HEK293 (cell line): ENCODE measurements at regions of chr1 and their contacts with region 1.

Region 1: DNA sequence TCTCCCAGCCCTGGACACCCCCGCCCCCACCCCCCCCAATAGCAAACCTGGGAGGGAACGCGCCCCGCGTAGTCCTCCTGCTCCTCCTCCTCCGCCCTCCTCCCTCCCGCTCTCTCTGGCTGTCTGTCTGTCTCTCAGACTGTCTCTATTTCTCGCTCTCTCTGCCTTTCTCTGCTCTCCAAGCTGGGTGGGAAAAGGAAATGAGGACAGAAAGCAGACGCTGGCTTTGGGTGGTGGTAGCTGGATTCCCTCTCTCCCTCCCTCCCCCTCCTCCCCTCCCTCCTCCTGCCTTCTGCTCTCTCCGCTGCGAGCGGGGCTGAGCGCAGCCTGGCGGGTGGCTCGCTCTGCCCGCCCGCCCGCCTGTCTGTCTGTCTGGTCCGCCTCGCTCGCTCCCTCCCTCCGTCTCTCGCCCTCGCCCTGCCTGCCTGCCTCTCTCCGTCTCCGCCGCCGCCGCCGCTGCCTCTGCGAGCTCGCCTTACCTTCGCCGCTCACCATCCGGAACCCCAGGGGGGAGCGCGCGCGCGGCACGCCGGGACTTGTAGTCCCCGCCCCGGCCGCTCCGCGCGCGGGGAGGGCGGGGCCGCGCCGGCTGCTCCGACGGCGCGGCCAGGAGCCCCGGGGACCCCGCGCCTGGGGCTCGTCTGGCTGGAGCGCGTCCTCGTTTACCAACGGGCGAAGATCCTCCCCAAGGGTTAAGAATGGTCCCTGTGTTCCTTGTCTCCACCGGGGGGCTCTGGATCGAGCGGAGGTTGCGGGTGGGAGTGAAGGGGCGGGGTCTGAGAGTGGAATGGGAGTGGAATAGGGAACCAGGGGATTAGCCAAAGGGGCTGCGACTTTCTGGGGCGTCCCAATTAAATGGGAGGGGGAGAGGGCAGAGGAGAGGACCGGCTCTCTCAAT is at the start of gene AHDC1:
- H3K4me3 ChIP-seq: peak within 1 kb of the TSS; percentile 69
- H3K27ac ChIP-seq: peak within 1 kb of the TSS; percentile 72
- H3K4me1 ChIP-seq: peaks cover 20% of the 10 kb centered on the region
- CTCF ChIP-seq: 0 out of 2 replicates have a peak, but pooled peaks have one; percentile 19

Region 2: DNA sequence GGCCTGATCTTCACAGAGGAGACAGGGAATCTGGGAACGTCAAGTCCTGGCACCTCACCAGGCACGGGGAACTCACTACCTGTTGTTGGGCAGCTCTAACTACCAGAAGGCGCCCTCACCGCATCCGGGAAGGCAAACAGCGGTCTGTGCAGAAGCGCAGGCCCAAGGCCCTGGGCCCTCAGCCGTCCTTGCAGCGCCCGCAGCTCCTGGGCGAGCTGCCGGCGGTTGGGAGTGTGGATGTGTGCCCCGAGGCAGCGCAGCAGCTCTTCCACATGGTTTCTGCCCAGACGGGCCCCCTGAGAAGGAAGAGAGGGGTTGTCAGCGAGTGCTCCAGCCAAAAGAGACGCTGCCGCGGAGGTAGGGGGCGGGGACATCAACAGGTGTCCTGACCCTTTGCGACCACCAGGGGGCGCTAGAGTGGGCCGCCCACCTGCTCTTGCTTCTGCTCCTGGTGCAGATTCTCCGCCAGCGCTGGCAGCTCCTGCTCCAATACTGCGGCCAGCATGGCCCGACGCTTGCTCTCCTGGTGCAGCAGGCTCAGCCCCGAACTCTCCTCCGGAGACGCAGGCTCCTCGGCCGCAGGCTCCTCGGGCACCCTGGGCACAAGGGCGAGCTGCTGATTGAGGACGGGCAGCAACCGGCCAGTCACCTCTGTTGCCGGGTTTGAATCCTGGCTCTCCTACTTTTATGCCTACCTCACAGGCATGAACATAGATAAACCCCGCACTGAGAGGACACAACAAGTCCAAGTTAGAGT is 246.5 kb before region 1 on chr1:
- CTCF ChIA-PET with region 1: interaction called, 11 read pairs
- POLR2A ChIA-PET with region 1: no interaction called
- H3K4me3 ChIP-seq: no peak overlapping the region
- H3K27ac ChIP-seq: no peak overlapping the region
- H3K4me1 ChIP-seq: no peaks in the 10 kb centered on the region
- CTCF ChIP-seq: peak; percentile 94

Region 3: GRCh38 chr1:27410709-27411108 is 193.2 kb before region 1 on chr1:
- CTCF ChIA-PET with region 1: interaction called, 37 read pairs
- POLR2A ChIA-PET with region 1: interaction called, 4 read pairs
- H3K4me3 ChIP-seq: no peak overlapping the region
- H3K27ac ChIP-seq: no peak overlapping the region
- H3K4me1 ChIP-seq: no peaks in the 10 kb centered on the region
- CTCF ChIP-seq: no peak

Region 4: DNA sequence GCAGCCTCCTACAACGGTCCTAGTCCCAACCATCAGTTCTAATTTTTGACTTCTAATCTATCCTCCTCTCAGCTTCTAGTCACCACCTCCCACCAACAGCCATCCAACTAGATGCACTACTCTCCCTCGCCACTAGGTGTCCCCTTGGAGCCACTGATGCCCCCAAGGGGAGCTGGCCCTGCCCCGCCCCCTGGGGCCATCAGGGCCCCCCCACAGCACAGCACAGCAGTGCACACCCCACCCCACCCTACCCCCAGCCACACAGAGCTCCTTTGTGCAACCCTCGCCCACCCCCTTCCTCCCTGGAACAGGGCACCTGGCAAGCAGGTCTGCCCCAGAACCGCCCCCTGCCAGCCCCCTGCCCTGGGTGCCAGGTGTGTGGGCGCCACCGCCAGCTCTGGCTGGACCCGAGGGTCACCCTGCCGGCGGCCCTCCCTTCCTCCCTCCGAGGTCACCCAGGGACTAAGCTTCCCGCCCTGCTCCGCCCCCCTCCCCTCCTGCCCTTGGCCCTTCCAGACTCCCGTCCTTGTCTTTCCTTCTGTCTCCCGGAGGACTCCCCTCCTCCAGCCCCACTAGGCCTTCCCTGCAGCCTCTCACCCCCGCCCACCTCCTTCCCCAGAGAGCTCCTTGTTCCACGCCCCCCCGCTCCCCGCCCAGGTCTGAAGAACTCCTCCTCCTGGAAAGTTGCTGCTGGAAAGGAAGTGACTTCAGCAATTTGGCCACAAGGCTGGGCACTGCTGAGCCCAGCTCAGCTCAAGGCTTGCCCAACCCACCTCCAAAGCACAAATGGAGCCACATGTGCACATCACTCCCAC is 46.9 kb before region 1 on chr1:
- CTCF ChIA-PET with region 1: interaction called, 92 read pairs
- POLR2A ChIA-PET with region 1: interaction called, 62 read pairs
- H3K4me3 ChIP-seq: peak overlapping the region; percentile 10
- H3K27ac ChIP-seq: no peak overlapping the region
- H3K4me1 ChIP-seq: no peaks in the 10 kb centered on the region
- CTCF ChIP-seq: peak; percentile 85

Region 5: GRCh38 chr1:27630859-27631491 is 27.0 kb after region 1 on chr1:
- CTCF ChIA-PET with region 1: interaction called, 15 read pairs
- POLR2A ChIA-PET with region 1: no interaction called
- H3K4me3 ChIP-seq: no peak overlapping the region
- H3K27ac ChIP-seq: no peak overlapping the region
- H3K4me1 ChIP-seq: no peaks in the 10 kb centered on the region
- CTCF ChIP-seq: no peak

Region 6: GRCh38 chr1:27671964-27672749 is 68.2 kb after region 1 on chr1 and contains the start of gene IFI6:
- CTCF ChIA-PET with region 1: interaction called, 317 read pairs
- POLR2A ChIA-PET with region 1: no interaction called
- H3K4me3 ChIP-seq: peak within 1 kb of the TSS; percentile 39
- H3K27ac ChIP-seq: peak within 1 kb of the TSS; percentile 57
- H3K4me1 ChIP-seq: no peaks in the 10 kb centered on the region
- CTCF ChIP-seq: peak; percentile 77